SK-N-SH (cell line): ENCODE measurements at regions of chrX and their contacts with region 1.

Region 1: DNA sequence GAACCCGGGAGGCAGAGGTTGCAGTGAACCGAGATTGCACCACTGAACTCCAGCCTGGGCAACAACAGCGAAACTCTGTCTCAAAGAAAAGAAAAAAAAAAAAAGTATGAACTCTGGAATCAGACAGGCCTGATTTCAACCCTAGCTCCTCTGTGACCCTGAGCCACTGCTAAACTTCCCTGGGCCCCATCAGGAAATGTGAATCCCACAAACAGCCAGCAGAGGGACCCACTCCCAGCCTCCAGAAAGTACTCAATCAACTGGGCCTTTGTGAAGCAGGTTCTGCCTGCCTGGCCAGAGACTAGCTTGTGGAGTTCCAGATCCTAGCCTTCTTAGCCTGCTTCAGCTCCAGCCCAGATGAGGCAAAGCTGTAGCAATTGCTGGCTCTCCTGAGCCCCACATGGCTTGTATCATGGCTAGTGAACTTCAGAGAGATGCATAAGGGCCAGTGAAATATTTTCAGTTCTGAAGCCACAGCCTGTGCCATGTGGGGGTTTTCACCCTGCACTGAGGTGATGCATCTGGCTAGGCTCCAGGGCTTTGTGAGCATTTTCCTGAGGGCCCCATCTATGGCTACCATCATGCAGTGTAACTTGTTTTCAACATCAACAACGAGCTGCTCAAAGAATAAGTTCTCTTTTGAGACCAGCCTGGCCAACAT is 7.2 kb upstream of the IDS start:
- DNase-seq: peak; percentile 58
- H3K4me3 ChIP-seq: no peak overlapping the region
- H3K27ac ChIP-seq: no peak overlapping the region
- H3K4me1 ChIP-seq: no peaks in the 10 kb centered on the region; a peak in 1 of 4 replicates
- H3K27me3 ChIP-seq: 0 out of 2 replicates have a peak, but pooled peaks cover 5% of the 10 kb centered on the region
- CTCF ChIP-seq: peak; percentile 72
- EP300 ChIP-seq: no peak
- RAD21 ChIP-seq: peak; percentile 62

Region 2: GRCh38 chrX:149522916-149523315 is 10.6 kb after region 1 on chrX:
- CTCF ChIA-PET with region 1: interaction called, 25 read pairs
- POLR2A ChIA-PET with region 1: interaction called, 3 read pairs
- DNase-seq: no peak
- H3K4me3 ChIP-seq: no peak overlapping the region
- H3K27ac ChIP-seq: peak overlapping the region in 1 of 2 experiments; percentile 60; a peak in 1 of 4 replicates
- H3K4me1 ChIP-seq: peaks cover 0 to 13% of the 10 kb centered on the region in 2 experiments; a peak in 1 of 4 replicates
- H3K27me3 ChIP-seq: no peaks in the 10 kb centered on the region; the same call in 1 of the 2 replicates
- CTCF ChIP-seq: no peak
- EP300 ChIP-seq: no peak
- RAD21 ChIP-seq: no peak

Region 3: DNA sequence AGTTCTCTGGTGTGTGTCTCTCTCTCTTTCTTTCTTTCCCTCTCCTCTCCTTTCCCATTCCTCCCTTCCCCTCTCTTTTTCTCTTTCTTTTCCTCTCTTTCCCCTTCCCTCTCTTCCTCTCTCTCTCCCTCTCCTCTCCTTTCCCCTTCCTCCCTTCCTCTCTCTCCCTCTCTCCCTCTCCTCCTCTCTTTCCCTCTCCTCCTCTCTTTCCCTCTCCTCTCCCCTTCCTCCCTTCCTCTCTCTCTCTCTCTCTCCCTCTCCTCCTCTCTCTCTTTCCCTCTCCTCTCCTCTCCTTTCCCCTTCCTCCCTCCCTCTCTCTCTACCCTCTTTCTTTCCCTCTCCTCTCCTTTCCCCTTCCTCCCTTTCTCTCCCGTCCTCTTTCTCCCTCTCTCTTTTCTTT is 16.0 kb after region 1 on chrX:
- CTCF ChIA-PET with region 1: interaction called, 25 read pairs
- POLR2A ChIA-PET with region 1: no interaction called
- DNase-seq: no peak
- H3K4me3 ChIP-seq: no peak overlapping the region
- H3K27ac ChIP-seq: no peak overlapping the region
- H3K4me1 ChIP-seq: peaks cover 0 to 5% of the 10 kb centered on the region in 2 experiments; a peak in 1 of 4 replicates
- H3K27me3 ChIP-seq: no peaks in the 10 kb centered on the region
- CTCF ChIP-seq: no peak
- EP300 ChIP-seq: no peak
- RAD21 ChIP-seq: no peak

Region 4: GRCh38 chrX:149572743-149573142 is 60.4 kb after region 1 on chrX:
- CTCF ChIA-PET with region 1: no interaction called
- POLR2A ChIA-PET with region 1: no interaction called
- DNase-seq: no peak
- H3K4me3 ChIP-seq: no peak overlapping the region
- H3K27ac ChIP-seq: peak overlapping the region in 1 of 2 experiments; percentile 35; a peak in 2 of 4 replicates
- H3K4me1 ChIP-seq: no peaks in the 10 kb centered on the region
- H3K27me3 ChIP-seq: no peaks in the 10 kb centered on the region; the same call in 1 of the 2 replicates
- CTCF ChIP-seq: no peak
- EP300 ChIP-seq: no peak
- RAD21 ChIP-seq: no peak

Region 5: GRCh38 chrX:150486011-150486410 is 973.7 kb after region 1 on chrX:
- CTCF ChIA-PET with region 1: no interaction called
- POLR2A ChIA-PET with region 1: no interaction called
- DNase-seq: peak; percentile 32
- H3K4me3 ChIP-seq: no peak overlapping the region
- H3K27ac ChIP-seq: no peak overlapping the region
- H3K4me1 ChIP-seq: no peaks in the 10 kb centered on the region
- H3K27me3 ChIP-seq: no peaks in the 10 kb centered on the region
- CTCF ChIP-seq: peak; percentile 70
- EP300 ChIP-seq: no peak
- RAD21 ChIP-seq: peak; percentile 57